Calu3 (cell line): ENCODE measurements at regions of chr18 and their contacts with region 1.

Region 1: GRCh38 chr18:12271376-12272235 is 17.4 kb downstream of the CIDEA start:
- DNase-seq: peak; percentile 85
- H3K4me3 Mint-ChIP-seq: peak overlapping the region; percentile 77
- H3K27ac Mint-ChIP-seq: no peak overlapping the region
- H3K4me1 Mint-ChIP-seq: no peaks in the 10 kb centered on the region
- H3K27me3 Mint-ChIP-seq: peaks cover 25% of the 10 kb centered on the region
- CTCF ChIP-seq: peak; percentile 90

Region 2: DNA sequence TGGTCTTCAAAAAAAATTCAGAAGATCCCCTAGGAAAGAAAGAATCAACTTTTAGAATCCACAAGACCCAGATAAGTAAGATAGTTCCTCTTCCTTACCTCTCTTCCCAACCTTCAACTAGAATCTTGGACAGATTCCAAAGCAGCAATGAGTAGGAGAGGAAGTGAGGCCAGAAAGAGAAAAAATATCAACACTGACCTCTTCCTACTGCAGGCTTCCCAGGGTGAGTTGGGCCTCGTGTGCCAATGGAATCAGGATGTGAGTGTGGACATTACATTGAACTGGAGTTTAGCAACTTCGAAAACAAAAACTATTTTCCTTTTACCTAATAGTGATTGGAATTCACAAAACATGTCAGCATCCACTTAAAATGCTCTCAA is 1019.7 kb before region 1 on chr18:
- CTCF ChIA-PET with region 1: no interaction called
- intact Hi-C with region 1: no loop called
- DNase-seq: no peak
- H3K4me3 Mint-ChIP-seq: no peak overlapping the region
- H3K27ac Mint-ChIP-seq: no peak overlapping the region
- H3K4me1 Mint-ChIP-seq: no peaks in the 10 kb centered on the region
- H3K27me3 Mint-ChIP-seq: peaks cover 32% of the 10 kb centered on the region
- CTCF ChIP-seq: no peak

Region 3: DNA sequence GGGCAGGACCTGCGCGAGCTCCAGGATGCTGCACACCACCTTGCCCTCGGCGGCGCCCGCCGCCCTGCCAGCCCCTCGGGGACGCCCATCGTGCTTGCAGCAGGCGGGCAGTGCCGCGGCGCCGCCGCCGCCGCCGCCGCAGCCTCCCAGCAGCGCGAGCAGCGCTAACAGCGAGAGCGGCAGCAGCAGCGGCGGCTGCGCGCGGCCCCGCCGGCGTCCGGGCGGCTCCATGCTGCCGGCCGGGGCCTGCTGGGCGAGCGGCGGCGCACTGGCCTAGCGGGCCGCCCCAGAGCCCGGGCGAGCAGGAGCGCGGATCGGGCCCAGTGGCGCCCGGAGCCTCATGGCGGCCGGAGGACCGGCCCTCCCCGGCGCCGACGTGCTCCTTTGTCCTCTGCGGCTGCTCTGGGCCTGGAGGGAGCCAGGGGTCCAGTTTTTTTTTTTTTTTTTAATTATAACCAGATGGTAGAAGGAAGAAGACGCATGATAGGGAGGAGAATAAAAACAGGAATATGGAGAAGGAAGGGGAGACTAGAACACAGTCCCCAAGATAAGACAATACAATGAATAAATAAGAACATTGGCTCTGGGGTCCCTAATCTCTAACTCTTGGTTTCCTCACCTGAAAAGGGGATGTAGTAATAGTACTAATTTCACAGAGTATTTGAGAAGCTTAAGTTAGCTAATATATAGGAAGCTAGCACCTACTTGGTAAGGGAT is 195.0 kb before region 1 on chr18:
- CTCF ChIA-PET with region 1: no interaction called
- intact Hi-C with region 1: no loop called
- DNase-seq: peak; percentile 29
- H3K4me3 Mint-ChIP-seq: peak overlapping the region; percentile 52
- H3K27ac Mint-ChIP-seq: no peak overlapping the region
- H3K4me1 Mint-ChIP-seq: no peaks in the 10 kb centered on the region
- H3K27me3 Mint-ChIP-seq: peaks cover 44% of the 10 kb centered on the region
- CTCF ChIP-seq: no peak

Region 4: DNA sequence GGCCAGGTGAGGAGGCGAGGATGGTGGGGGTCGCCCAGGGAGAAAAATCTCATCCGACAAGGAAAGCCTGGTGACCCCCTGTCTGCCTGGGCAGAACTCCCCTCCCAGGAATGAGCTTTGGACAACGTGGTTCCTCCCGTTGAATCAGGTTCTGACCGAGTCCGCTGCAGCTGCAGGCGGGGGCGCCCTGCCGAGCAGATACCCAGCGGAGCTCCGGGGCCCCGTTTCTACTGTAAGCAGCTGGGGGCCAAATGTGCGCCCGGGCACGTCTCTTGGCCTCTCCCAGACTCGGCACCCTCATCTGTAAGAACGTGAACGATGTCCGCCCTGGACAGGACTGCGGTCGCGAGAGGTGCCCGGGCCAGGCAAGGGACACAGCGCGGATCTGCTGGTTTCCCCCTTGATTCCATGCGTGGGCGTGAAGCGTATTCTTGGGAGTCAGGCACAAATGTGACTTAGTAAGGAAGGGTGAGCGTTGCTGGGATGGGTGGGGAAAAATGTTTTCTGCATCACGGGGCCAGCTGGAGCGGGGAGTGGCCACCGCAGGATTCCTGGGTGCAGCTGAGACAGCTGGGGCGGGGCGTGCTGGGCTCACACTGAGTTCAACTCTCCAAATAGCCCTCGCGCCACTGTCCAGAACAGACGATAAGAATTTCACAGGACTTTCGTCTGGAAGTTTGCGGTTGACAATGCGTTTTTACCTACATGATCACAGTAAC is 16.2 kb after region 1 on chr18:
- CTCF ChIA-PET with region 1: interaction called, 21 read pairs
- intact Hi-C with region 1: no loop called
- DNase-seq: peak; percentile 77
- H3K4me3 Mint-ChIP-seq: peak overlapping the region; percentile 82
- H3K27ac Mint-ChIP-seq: no peak overlapping the region
- H3K4me1 Mint-ChIP-seq: peaks cover 16% of the 10 kb centered on the region
- H3K27me3 Mint-ChIP-seq: peaks cover 33% of the 10 kb centered on the region
- CTCF ChIP-seq: no peak

Region 5: GRCh38 chr18:12308386-12309100 is 36.9 kb after region 1 on chr18:
- CTCF ChIA-PET with region 1: interaction called, 3 read pairs
- intact Hi-C with region 1: loop called (anchors 1 kb)
- DNase-seq: peak; percentile 64
- H3K4me3 Mint-ChIP-seq: peak overlapping the region; percentile 73
- H3K27ac Mint-ChIP-seq: no peak overlapping the region
- H3K4me1 Mint-ChIP-seq: peaks cover 7% of the 10 kb centered on the region
- H3K27me3 Mint-ChIP-seq: peaks cover 32% of the 10 kb centered on the region
- CTCF ChIP-seq: no peak

Region 6: DNA sequence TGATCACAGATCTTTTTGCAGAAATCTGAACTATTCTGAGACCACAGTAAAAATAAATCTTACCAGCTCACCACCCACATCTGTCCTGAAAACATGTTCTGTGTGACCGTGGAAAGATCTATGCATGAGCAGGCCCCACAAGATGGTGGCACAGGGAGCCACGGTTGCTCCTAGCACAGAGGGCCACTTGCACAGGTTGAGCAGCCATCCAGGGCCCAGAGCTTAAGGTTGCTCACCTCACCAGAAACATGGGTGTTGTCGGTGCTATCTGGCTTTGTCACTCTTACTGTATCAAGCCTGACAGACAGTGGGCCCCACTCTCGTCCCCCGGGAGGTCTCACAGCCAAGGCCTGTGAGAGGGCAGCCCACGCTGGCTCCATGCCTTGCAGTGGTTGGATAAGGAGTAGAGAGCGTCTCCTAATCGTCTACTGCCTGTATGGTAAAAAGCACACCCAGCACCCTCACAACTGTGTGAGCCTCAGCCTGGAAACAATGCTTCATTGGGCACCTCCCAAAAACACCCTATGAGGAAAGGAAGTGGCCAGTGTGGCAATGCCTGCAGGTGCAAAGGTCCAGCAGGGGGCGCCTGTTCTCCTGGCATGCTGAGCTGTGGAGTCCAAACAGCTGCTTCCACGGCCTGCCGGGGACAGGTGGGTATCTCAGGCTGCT is 56.0 kb after region 1 on chr18:
- CTCF ChIA-PET with region 1: interaction called, 18 read pairs
- intact Hi-C with region 1: no loop called
- DNase-seq: peak; percentile 87
- H3K4me3 Mint-ChIP-seq: no peak overlapping the region
- H3K27ac Mint-ChIP-seq: no peak overlapping the region
- H3K4me1 Mint-ChIP-seq: no peaks in the 10 kb centered on the region
- H3K27me3 Mint-ChIP-seq: no peaks in the 10 kb centered on the region
- CTCF ChIP-seq: peak; percentile 93